BJ (cell line): ENCODE measurements at regions of chr7 and their contacts with region 1.

Region 1: GRCh38 chr7:14457568-14458453 is 444.7 kb downstream of the DGKB start:
- DNase-seq: peak; percentile 12
- H3K4me3 ChIP-seq: no peak overlapping the region
- H3K27me3 ChIP-seq: no peaks in the 10 kb centered on the region
- CTCF ChIP-seq: peak; percentile 81

Region 2: DNA sequence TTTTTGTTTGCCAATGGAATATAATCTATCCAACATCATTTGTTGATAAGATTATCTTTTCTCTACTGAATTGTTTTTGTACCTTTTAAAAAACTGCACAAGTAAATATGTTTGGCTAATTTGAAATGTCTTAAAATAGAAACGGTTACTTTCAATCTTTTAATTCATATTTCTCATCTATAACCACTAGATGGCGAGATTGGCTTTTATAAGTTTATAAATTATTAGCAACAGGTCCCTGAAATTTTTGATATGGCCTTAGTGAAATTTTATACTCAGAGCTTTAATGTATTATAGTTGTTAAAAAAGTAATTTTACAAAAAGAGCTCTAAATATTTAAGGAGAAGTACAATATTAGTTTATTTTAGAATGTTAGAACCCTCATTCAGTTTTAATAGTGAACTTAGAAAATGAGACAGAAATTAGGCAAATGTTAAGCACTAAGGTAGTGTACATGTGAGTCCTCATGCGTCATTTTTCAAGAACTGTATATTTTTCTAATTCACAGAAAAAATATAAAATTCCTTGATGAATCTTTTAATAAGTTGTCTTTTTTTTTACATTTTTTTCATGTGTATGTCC is 1177.9 kb before region 1 on chr7:
- CTCF ChIA-PET with region 1: interaction called, 16 read pairs
- POLR2A ChIA-PET with region 1: no interaction called
- DNase-seq: no peak
- H3K4me3 ChIP-seq: no peak overlapping the region
- H3K27me3 ChIP-seq: no peaks in the 10 kb centered on the region
- CTCF ChIP-seq: peak; percentile 27

Region 3: DNA sequence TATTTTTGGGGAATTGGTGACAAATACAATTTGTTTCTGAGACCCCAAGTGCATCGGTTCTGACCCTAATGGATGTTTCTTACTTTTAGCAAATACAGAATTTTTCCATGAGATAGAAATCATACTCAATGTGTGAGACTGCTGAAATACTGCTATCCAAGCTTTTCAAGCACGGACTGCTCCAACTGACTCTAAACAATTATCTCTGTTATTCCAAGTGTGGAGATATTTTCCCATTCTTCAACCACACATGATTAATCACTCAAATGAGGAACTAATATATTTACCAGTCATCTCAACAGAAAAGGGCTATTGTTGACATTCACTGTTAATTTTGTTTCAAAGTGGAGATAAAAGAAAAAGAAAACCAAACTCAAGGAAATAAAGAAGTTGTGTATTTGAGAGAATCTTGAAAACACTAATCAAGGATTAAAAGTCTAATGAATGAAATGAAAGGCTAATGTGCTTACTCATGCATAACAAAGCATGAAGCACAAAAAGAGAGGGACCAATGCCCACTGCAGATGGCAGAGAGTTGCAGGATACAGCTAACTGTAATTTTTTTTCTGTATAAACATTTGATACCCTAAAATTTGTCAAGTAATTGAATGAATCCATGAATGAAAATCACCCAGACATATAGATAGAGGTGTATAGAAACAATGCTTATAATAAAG is 21.2 kb after region 1 on chr7:
- CTCF ChIA-PET with region 1: no interaction called
- POLR2A ChIA-PET with region 1: no interaction called
- DNase-seq: no peak
- H3K4me3 ChIP-seq: no peak overlapping the region
- H3K27me3 ChIP-seq: no peaks in the 10 kb centered on the region
- CTCF ChIP-seq: no peak